Right ventricle myocardium inferior (tissue), 1 donor: ENCODE measurements at regions of chr3 and their contacts with region 1.

Region 1: GRCh38 chr3:16884084-16884747 is 539 bp upstream of the PLCL2 start:
- DNase-seq: peak; percentile 85
- ATAC-seq: peak; percentile 77

Region 2: GRCh38 chr3:16600780-16601539 is 283.3 kb before region 1 on chr3:
- intact Hi-C with region 1: loop called (anchors 5 kb)
- DNase-seq: peak; percentile 89
- ATAC-seq: no peak

Region 3: DNA sequence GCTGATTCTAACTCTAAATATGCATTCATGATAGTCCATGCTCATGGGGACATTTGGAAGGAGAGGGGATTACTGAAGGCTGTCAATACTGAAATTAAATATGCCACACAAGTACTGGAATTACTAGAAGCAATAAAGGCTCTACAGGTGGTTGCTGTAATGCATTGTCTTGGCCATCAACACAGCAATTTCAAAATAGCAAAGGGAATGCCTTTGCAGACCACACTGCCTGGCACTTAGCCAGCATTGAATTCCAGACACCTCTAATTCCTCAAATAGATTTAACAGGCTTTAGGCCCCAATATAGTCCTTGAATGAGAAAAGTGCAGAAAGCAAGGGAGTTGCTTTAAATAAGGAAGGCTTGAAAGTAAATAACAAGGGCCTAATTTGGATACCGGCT is 115.3 kb before region 1 on chr3:
- intact Hi-C with region 1: loop called (anchors 2 kb)
- DNase-seq: no peak
- ATAC-seq: no peak

Region 4: GRCh38 chr3:16897254-16897926 is 13.2 kb after region 1 on chr3:
- intact Hi-C with region 1: loop called (anchors 2 kb)
- DNase-seq: no peak
- ATAC-seq: no peak

Region 5: DNA sequence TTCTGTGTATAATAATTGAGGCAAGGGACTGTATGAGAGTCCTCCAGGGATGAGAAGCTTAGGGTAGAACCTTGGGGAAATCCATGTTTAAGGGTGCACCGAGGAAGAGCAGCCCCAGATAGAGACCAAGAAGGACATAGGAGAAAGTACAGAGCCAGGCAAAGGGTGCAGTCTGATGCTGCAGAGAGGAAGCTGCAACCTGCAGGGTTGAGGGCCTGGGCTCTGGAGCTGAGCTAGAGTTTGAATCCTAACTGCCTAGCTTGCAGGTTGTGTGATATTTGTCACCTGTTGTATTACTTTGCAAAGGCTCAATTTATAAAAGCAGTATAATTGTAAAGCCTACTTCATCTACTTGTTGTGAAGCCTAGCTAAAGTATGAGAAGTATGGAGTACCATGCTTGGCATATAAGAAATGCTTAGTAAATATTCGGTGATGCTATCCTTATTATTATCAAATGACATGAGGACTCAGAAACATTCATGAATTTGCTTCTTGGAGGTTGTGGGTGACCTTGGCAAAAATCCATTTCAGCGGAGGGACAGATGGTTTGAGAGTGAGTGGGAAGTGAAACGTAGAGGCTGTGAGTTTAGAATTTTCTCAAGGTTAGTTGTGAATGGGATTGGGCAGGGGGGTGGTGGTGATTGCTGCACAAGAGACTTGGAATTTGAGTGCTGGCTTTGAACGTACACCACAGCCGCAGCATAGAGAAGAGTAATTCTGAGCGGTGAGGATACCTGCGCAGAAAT is 44.3 kb after region 1 on chr3:
- intact Hi-C with region 1: no loop called
- DNase-seq: no peak
- ATAC-seq: no peak

Region 6: DNA sequence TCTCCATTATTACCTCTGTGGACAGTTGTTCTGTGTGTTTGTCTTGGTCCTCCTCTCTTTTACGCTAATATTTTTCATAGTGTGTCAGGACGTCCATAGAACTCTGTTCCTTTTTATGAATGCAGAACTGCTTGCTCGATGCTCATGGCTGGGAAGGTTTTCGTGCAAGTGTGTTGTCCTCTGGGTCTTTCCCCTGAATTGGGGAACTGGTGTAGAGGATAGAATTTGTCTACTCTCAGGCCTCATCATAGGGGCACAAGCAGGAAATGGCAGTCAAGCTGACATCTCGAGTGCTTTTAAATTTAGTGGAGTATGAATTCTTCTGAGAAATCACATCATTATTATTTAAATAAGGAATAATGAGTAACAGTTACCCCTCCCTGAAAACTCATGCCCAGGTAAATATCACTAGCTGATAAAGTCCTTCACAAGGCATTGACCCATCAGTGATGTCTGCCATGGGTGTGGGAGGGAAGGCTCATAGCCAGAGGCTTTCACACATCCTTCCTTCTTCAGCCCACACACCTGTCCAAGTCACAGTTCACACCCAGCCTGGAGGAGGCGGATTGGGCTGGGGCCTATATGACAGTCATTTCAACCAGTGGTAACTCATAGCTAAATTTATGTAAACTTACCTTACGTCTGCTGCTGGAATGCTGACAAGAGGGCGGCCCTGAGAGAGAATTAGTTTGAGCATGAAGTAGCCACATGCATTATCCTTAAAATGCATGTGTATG is 226.6 kb after region 1 on chr3:
- intact Hi-C with region 1: no loop called
- DNase-seq: no peak
- ATAC-seq: no peak

Region 7: GRCh38 chr3:17140670-17141505 is 256.7 kb after region 1 on chr3:
- intact Hi-C with region 1: loop called (anchors 5 kb)
- DNase-seq: peak; percentile 71
- ATAC-seq: peak; percentile 72